ENCODE measurements at regions of chr6 and their contacts with region 1.

Region 1: GRCh38 chr6:155327326-155328073 is 13.2 kb upstream of the TFB1M start:
- DNase-seq: no peak
- ATAC-seq: no peak

Region 2: DNA sequence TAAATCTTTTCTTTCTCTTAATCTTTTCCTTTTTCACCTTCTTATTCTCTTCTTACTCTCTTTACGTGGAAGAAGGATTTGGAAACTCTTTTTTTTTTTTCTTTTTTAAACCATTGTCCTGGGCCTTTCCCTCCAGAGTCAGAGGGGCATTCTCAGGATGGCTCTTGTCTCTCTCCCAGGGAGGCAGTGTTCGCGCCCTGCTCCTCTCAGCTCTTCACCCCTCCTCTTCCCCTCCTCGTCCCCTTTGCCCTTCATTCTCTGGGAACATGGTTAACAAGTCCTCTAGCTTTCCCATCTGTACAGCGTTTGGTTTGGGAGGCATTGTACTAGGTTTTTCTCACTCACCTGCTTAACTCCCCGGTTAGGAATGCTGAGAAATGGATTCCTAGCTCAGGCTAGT is 38.8 kb after region 1 on chr6:
- intact Hi-C with region 1: no loop called
- DNase-seq: no peak
- ATAC-seq: no peak

Region 3: DNA sequence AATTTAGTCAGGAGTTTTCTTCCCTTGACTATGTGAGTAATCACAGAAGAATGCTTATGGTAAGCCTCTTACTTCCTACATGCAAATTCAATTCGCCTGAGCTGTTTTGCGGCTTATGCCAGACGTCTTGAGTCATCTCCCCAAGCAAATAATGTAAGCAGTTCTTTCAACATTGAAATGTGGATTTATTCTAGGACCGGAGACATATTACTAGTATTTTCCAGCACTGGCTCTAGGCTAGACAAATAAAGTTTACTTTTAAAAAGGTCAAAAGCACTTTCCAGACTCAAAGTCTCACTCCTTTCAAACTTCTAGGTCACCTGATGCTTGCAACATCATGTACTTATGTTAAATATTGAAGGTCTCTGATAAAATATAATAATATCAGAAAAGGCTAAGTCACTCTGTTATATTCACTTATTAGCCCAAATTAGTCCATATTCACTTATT is 166.2 kb after region 1 on chr6:
- intact Hi-C with region 1: loop called (anchors 10 kb)
- DNase-seq: no peak
- ATAC-seq: peak; percentile 65

Region 4: DNA sequence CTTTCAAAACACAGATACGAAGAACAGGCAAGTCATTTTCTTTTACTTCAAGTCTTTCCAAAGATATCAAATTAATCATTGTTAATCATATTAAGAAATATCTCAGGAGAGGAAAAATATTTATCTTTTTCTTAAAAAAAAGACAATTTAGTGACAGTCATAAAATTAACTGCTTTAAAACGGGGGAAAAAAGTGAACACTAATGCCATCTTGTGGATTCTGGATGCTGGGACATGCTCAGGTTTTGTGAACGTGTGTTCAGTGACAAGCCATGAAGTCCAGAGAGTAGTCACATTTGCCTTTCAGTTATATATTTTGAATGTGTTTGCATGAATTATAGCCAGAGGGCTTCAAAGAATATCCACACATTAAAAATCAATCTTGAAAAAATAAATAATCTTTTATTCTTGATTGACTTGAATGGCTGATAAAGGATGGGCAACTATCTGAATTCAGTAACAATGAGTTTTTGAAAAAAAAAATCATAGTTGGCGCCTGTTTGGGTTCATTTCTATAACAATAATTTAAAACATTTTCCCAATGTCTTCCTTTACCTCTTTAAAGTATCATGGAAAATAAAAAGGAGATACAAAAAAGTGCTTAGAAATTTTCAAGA is 202.8 kb after region 1 on chr6:
- intact Hi-C with region 1: loop called (anchors 2 kb)
- DNase-seq: no peak
- ATAC-seq: no peak

Measured in Right ventricle myocardium inferior (tissue), 1 donor.